CD4-positive, alpha-beta memory T cell (primary cell): ENCODE measurements at regions of chr3 and their contacts with region 1.

Region 1: DNA sequence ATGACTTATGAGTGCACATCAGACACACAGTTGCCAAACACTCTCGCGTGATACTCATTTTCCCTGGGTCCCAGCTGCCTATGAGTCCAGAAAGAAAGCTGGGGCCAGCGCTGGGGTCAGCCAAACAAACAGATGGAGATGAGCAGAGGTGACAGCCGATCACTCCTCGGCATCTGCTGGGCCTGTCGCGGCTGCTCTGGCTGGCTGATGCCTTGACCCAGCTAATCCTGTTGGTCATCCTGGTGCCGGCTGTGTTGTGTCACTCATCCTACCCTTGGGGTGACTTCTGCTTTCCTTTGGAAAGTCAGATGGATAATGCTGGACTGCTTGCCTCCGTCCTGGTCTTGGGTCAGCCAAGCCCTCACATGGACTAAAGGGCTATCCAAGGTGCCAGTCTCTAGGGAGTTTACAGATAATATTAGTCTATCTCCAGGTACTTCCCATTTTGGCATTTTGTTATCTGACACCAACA is 105.3 kb upstream of the PDZRN3 start:
- DNase-seq: no peak
- H3K4me3 ChIP-seq: no peak overlapping the region
- H3K4me3 Mint-ChIP-seq: no peak overlapping the region
- H3K27ac ChIP-seq: no peak overlapping the region
- H3K27ac Mint-ChIP-seq: no peak overlapping the region
- H3K4me1 ChIP-seq: no peaks in the 10 kb centered on the region
- H3K4me1 Mint-ChIP-seq: no peaks in the 10 kb centered on the region
- H3K27me3 ChIP-seq: no peaks in the 10 kb centered on the region
- H3K27me3 Mint-ChIP-seq: no peaks in the 10 kb centered on the region

Region 2: DNA sequence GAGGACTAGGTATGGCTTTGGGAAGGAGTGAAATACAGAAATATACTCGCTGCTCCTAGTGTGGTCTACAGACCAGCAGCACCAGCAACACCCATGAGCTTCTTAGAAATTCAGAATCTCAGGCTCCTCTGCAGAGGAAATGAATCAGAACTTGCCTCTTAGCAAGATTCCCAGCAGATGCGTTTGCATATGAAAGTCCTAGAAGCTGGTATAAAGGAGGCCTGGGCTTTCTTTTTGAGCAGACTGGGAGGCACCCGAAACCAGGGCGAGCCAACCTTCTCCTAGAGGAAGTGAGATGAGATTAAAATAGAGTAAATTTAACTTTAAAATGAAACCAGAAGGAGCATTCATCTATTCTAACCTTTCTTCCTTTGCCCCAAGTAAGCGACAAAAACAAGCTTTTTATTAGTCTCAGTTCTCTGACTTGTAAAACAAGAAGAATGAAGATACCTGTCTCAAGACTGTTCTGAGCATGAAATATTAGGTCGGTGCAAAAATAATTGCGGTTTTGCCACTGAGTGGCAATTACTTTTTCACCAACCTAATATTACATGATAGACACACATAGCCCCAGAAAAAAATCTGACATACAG is 245.3 kb before region 1 on chr3:
- CTCF ChIA-PET with region 1: no interaction called
- POLR2A ChIA-PET with region 1: no interaction called
- intact Hi-C with region 1: loop called (anchors 10 kb)
- DNase-seq: no peak
- H3K4me3 ChIP-seq: no peak overlapping the region
- H3K4me3 Mint-ChIP-seq: no peak overlapping the region
- H3K27ac ChIP-seq: no peak overlapping the region
- H3K27ac Mint-ChIP-seq: no peak overlapping the region
- H3K4me1 ChIP-seq: no peaks in the 10 kb centered on the region
- H3K4me1 Mint-ChIP-seq: peaks cover 0 to 2% (median 0%) of the 10 kb centered on the region in 4 donors
- H3K27me3 ChIP-seq: no peaks in the 10 kb centered on the region
- H3K27me3 Mint-ChIP-seq: peaks cover 4% of the 10 kb centered on the region in 2 donors

Region 3: GRCh38 chr3:73719861-73720260 is 10.1 kb before region 1 on chr3:
- CTCF ChIA-PET with region 1: no interaction called
- POLR2A ChIA-PET with region 1: no interaction called
- intact Hi-C with region 1: no loop called
- DNase-seq: no peak
- H3K4me3 ChIP-seq: no peak overlapping the region
- H3K4me3 Mint-ChIP-seq: no peak overlapping the region
- H3K27ac ChIP-seq: no peak overlapping the region
- H3K27ac Mint-ChIP-seq: no peak overlapping the region
- H3K4me1 ChIP-seq: no peaks in the 10 kb centered on the region
- H3K4me1 Mint-ChIP-seq: no peaks in the 10 kb centered on the region
- H3K27me3 ChIP-seq: no peaks in the 10 kb centered on the region
- H3K27me3 Mint-ChIP-seq: no peaks in the 10 kb centered on the region